ENCODE measurements at regions of chr9 and their contacts with region 1.

Region 1: GRCh38 chr9:70609542-70610286 is 195.3 kb upstream of the KLF9 start:
- DNase-seq: peak; percentile 98
- ATAC-seq: peak; percentile 83
- H3K4me3 ChIP-seq: no peak overlapping the region
- H3K27ac ChIP-seq: 0 out of 2 replicates have a peak overlapping the region, but pooled peaks have one; percentile 41
- H3K4me1 ChIP-seq: peaks cover 9% of the 10 kb centered on the region
- H3K27me3 ChIP-seq: no peaks in the 10 kb centered on the region
- CTCF ChIP-seq: no peak
- POLR2A ChIP-seq: no peak
- RAD21 ChIP-seq: no peak

Region 2: DNA sequence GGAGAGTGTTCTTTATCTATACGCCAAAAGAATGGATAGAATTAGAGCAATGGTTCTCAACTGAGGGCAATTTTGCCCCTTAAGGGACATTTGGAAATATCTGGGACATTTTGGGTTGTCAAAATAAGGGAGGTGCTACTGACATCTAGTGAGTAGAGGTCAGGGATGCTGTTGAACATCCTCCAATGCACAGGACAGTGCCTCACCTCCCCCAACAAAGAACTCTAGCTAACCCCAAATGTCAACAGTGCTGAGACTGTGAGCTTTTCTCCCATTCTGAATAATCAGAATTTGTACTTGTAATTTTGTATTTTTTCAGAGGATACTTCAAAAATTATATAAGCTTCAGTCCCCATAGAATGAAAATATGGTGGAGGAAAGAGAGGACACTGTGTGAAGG is 359.5 kb before region 1 on chr9:
- CTCF ChIA-PET with region 1: no interaction called
- POLR2A ChIA-PET with region 1: no interaction called
- dilution Hi-C with region 1: no loop called
- in situ Hi-C with region 1: no loop called
- intact Hi-C with region 1: loop called (anchors 5 kb)
- DNase-seq: no peak
- ATAC-seq: no peak
- H3K4me3 ChIP-seq: no peak overlapping the region
- H3K27ac ChIP-seq: no peak overlapping the region
- H3K4me1 ChIP-seq: no peaks in the 10 kb centered on the region
- H3K27me3 ChIP-seq: no peaks in the 10 kb centered on the region
- CTCF ChIP-seq: no peak
- POLR2A ChIP-seq: no peak
- RAD21 ChIP-seq: no peak

Region 3: DNA sequence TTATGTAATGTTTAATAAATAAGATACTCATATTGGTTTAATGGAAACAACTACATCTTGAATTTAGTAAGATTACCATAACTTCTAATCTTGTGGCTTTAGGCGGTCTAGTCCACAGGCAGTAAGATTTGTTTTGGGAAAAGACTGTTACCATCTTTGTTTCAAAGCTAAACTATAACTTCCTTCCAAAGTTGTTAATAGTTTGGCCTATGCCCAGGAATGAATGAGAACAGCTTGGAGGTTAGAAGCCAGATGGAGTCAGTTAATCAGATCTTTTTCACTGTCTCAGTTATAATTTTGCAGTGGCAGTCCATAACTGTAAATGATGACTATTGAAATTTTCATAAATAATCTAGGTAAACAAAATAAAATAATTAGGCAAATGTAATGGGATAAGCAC is 46.6 kb after region 1 on chr9:
- CTCF ChIA-PET with region 1: no interaction called
- POLR2A ChIA-PET with region 1: no interaction called
- dilution Hi-C with region 1: no loop called
- in situ Hi-C with region 1: no loop called
- intact Hi-C with region 1: no loop called
- DNase-seq: no peak
- ATAC-seq: no peak
- H3K4me3 ChIP-seq: no peak overlapping the region
- H3K27ac ChIP-seq: no peak overlapping the region
- H3K4me1 ChIP-seq: no peaks in the 10 kb centered on the region
- H3K27me3 ChIP-seq: no peaks in the 10 kb centered on the region; the same call in 1 of the 2 replicates
- CTCF ChIP-seq: no peak
- POLR2A ChIP-seq: no peak
- RAD21 ChIP-seq: no peak

Measured in IMR-90 (cell line).